Panc1 (cell line): ENCODE measurements at regions of chr15 and their contacts with region 1.

Region 1: GRCh38 chr15:56411122-56411749 is 46.0 kb downstream of the TEX9 start:
- DNase-seq: no peak
- ATAC-seq: no peak
- H3K4me3 ChIP-seq: no peak overlapping the region
- H3K27ac ChIP-seq: no peak overlapping the region
- H3K4me1 ChIP-seq: no peaks in the 10 kb centered on the region
- H3K27me3 ChIP-seq: no peaks in the 10 kb centered on the region
- CTCF ChIP-seq: no peak

Region 2: DNA sequence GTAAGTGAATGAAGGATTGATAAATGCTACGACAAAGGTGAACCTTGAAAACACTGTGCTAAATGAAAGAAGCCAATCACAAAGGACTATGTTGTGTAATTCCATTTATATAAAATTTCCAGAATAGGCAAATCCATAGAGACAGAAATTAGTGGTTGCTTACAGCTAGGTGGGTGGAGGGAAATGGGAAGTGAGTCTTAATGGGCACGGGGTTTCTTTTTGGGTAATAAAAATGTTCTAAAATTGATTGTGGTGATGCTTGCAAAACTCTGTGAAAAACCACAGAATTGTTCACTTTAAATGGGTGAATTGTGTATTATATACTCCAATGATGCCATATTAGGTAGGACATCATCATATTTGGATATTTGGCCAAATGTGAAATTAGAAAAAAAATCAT is 66.9 kb before region 1 on chr15:
- CTCF ChIA-PET with region 1: no interaction called
- POLR2A ChIA-PET with region 1: no interaction called
- in situ Hi-C with region 1: no loop called
- intact Hi-C with region 1: loop called (anchors 2 kb)
- DNase-seq: no peak
- ATAC-seq: no peak
- H3K4me3 ChIP-seq: no peak overlapping the region
- H3K27ac ChIP-seq: no peak overlapping the region
- H3K4me1 ChIP-seq: no peaks in the 10 kb centered on the region
- H3K27me3 ChIP-seq: peaks cover 2% of the 10 kb centered on the region; the same call in 1 of the 2 replicates
- CTCF ChIP-seq: no peak

Region 3: DNA sequence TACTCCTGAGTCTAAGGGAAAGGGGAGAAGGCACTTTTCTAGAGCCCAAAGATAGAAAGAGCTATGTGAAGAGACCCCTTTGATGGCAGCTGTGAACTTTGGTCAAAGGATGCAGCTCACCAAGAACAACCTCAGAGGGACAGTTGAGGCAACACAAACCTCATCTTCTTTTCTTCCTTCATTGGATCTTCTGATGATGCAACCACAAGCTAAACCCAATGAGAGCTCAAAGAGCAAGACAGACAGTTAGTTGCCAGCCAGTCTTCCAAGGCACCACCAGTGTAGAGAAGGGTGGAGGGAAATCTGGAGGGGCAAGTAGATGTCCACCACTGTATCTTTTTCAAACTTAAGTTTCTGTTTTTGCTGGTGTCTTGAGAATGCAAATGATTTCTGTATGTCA is 64.1 kb after region 1 on chr15:
- CTCF ChIA-PET with region 1: no interaction called
- POLR2A ChIA-PET with region 1: no interaction called
- in situ Hi-C with region 1: no loop called
- intact Hi-C with region 1: no loop called
- DNase-seq: no peak
- ATAC-seq: no peak
- H3K4me3 ChIP-seq: no peak overlapping the region
- H3K27ac ChIP-seq: no peak overlapping the region
- H3K4me1 ChIP-seq: no peaks in the 10 kb centered on the region
- H3K27me3 ChIP-seq: peaks cover 3% of the 10 kb centered on the region
- CTCF ChIP-seq: no peak

Region 4: GRCh38 chr15:56821721-56822425 is 410.6 kb after region 1 on chr15:
- CTCF ChIA-PET with region 1: no interaction called
- POLR2A ChIA-PET with region 1: no interaction called
- in situ Hi-C with region 1: no loop called
- intact Hi-C with region 1: no loop called
- DNase-seq: peak; percentile 25
- ATAC-seq: peak; percentile 92
- H3K4me3 ChIP-seq: no peak overlapping the region
- H3K27ac ChIP-seq: no peak overlapping the region
- H3K4me1 ChIP-seq: no peaks in the 10 kb centered on the region; the same call in 1 of the 2 replicates
- H3K27me3 ChIP-seq: no peaks in the 10 kb centered on the region
- CTCF ChIP-seq: peak; percentile 78